GM12878 (cell line): ENCODE measurements at regions of chr14 and their contacts with region 1.

Region 1: GRCh38 chr14:97380539-97380941 is 583.4 kb downstream of the VRK1 start:
- DNase-seq: no peak
- ATAC-seq: no peak
- H3K4me3 ChIP-seq: no peak overlapping the region
- H3K27ac ChIP-seq: no peak overlapping the region
- H3K4me1 ChIP-seq: peaks cover 33% of the 10 kb centered on the region
- H3K27me3 ChIP-seq: no peaks in the 10 kb centered on the region
- CTCF ChIP-seq: no peak
- EP300 ChIP-seq: no peak
- POLR2A ChIP-seq: no peak
- RAD21 ChIP-seq: no peak

Region 2: GRCh38 chr14:97177015-97177414 is 203.5 kb before region 1 on chr14:
- CTCF ChIA-PET with region 1: no interaction called
- POLR2A ChIA-PET with region 1: interaction called, 3 read pairs
- RAD21 ChIA-PET with region 1: interaction called, 3 read pairs
- SMC1A ChIA-PET with region 1: interaction called, 3 read pairs
- in situ Hi-C with region 1: no loop called
- intact Hi-C with region 1: loop called (anchors 10 kb)
- DNase-seq: no peak
- ATAC-seq: peak; percentile 82
- H3K4me3 ChIP-seq: no peak overlapping the region
- H3K27ac ChIP-seq: no peak overlapping the region
- H3K4me1 ChIP-seq: peaks cover 4% of the 10 kb centered on the region; the same call in 1 of the 2 replicates
- H3K27me3 ChIP-seq: no peaks in the 10 kb centered on the region
- CTCF ChIP-seq: peak; percentile 8 to 41 (median 27); a peak in 3 of 6 replicates
- EP300 ChIP-seq: no peak
- POLR2A ChIP-seq: no peak
- RAD21 ChIP-seq: peak; percentile 53

Region 3: GRCh38 chr14:97299661-97300060 is 80.9 kb before region 1 on chr14:
- CTCF ChIA-PET with region 1: interaction called, 13 read pairs
- POLR2A ChIA-PET with region 1: interaction called, 14 read pairs
- RAD21 ChIA-PET with region 1: interaction called, 214 read pairs
- SMC1A ChIA-PET with region 1: interaction called, 43 read pairs
- in situ Hi-C with region 1: no loop called
- intact Hi-C with region 1: no loop called
- DNase-seq: no peak
- ATAC-seq: peak; percentile 55
- H3K4me3 ChIP-seq: no peak overlapping the region
- H3K27ac ChIP-seq: no peak overlapping the region
- H3K4me1 ChIP-seq: no peaks in the 10 kb centered on the region
- H3K27me3 ChIP-seq: no peaks in the 10 kb centered on the region
- CTCF ChIP-seq: peak; percentile 17 to 49 (median 39); a peak in 5 of 6 replicates
- EP300 ChIP-seq: no peak
- POLR2A ChIP-seq: no peak
- RAD21 ChIP-seq: peak; percentile 78

Region 4: DNA sequence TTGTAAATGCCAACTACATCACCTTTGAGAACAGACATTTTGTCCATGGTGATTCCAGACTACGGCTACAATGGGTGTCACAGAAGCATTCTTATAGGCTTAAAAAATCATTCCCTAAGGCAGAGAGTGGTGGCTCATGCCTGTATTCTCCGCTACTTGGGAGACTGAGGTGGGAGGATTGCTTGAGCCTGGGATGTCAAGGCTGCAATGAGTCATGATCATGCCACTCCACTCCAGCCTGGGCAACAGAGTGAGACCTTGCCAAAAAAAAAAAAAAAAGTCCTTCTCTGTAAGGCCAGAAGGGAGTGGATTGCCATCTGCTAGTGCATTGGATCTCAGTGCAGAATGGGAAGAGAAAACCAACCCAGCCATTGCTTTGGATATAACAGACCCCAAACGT is 60.8 kb before region 1 on chr14:
- CTCF ChIA-PET with region 1: no interaction called
- POLR2A ChIA-PET with region 1: no interaction called
- RAD21 ChIA-PET with region 1: interaction called, 13 read pairs
- SMC1A ChIA-PET with region 1: interaction called, 7 read pairs
- in situ Hi-C with region 1: no loop called
- intact Hi-C with region 1: no loop called
- DNase-seq: no peak
- ATAC-seq: no peak; the same call in 2 of the 3 replicates
- H3K4me3 ChIP-seq: no peak overlapping the region
- H3K27ac ChIP-seq: no peak overlapping the region
- H3K4me1 ChIP-seq: peaks cover 8% of the 10 kb centered on the region
- H3K27me3 ChIP-seq: no peaks in the 10 kb centered on the region
- CTCF ChIP-seq: no peak
- EP300 ChIP-seq: no peak
- POLR2A ChIP-seq: no peak
- RAD21 ChIP-seq: no peak

Region 5: DNA sequence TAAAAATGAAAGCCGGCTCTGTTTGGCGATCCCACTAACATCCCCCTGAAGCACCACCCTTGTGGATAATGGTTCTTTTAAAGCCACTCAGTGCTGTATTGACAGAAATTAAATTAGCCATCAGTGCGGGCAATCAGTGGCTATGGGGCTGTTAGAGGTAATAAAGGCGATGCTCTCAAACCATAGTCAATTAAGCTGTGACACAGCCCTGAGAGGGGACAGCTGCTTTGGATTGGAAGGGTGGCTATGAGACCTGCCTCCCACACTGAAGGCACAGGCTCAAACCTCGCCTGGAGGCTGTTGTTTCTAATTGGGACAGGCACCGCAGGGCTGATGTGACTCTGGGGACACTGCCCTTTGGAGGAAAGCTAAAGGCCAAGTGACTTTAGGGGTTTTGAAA is 21.2 kb before region 1 on chr14:
- CTCF ChIA-PET with region 1: interaction called, 5 read pairs
- POLR2A ChIA-PET with region 1: interaction called, 8 read pairs
- RAD21 ChIA-PET with region 1: interaction called, 12 read pairs
- SMC1A ChIA-PET with region 1: interaction called, 12 read pairs
- in situ Hi-C with region 1: no loop called
- intact Hi-C with region 1: no loop called
- DNase-seq: no peak
- ATAC-seq: no peak
- H3K4me3 ChIP-seq: no peak overlapping the region
- H3K27ac ChIP-seq: no peak overlapping the region
- H3K4me1 ChIP-seq: no peaks in the 10 kb centered on the region
- H3K27me3 ChIP-seq: no peaks in the 10 kb centered on the region
- CTCF ChIP-seq: no peak
- EP300 ChIP-seq: no peak
- POLR2A ChIP-seq: no peak
- RAD21 ChIP-seq: no peak

Region 6: DNA sequence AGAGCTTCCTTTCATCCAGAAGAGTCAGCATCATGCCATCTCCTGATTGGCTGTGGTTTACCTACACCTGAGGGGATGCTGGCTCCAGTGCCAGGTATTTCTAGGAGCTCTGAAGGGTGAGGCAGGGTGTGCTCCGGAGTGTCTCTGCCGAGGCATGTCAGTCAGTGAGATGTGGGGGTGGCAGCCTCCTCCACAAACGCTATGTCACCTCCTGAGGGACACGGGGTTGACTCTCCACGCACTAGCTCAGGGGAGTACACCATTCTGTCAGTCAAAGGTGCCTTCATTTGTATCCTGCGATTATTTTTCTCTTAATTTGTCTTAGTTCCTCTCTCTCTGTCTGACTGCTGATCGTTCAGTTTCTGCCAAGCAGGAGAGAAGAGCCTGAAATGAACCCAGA is 21.2 kb after region 1 on chr14:
- CTCF ChIA-PET with region 1: interaction called, 3 read pairs
- POLR2A ChIA-PET with region 1: interaction called, 6 read pairs
- RAD21 ChIA-PET with region 1: interaction called, 83 read pairs
- SMC1A ChIA-PET with region 1: interaction called, 115 read pairs
- in situ Hi-C with region 1: no loop called
- intact Hi-C with region 1: no loop called
- DNase-seq: no peak
- ATAC-seq: peak; percentile 39; the same call in 2 of the 3 replicates
- H3K4me3 ChIP-seq: no peak overlapping the region
- H3K27ac ChIP-seq: no peak overlapping the region
- H3K4me1 ChIP-seq: peaks cover 4% of the 10 kb centered on the region; the same call in 1 of the 2 replicates
- H3K27me3 ChIP-seq: no peaks in the 10 kb centered on the region
- CTCF ChIP-seq: no peak
- EP300 ChIP-seq: no peak
- POLR2A ChIP-seq: no peak
- RAD21 ChIP-seq: no peak

Region 7: DNA sequence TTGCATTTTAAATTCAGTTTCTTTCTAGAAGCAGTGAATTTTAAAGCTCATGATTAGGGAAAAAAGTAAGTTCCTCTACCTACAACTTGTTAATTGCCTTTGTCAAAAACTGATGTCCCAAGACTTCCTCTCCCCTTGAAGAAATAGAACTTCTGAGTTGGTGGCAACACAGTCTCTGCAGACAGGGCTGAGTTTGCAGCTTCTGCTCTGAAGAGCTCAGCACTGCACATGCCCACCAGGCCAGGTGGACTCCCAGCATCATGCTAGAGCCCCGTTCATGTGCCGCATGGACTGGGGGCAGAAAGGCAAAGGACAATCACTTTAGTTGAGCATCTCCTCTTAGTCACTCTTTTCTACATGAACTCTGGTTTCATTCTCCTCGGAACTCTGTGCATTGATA is 36.8 kb after region 1 on chr14:
- CTCF ChIA-PET with region 1: interaction called, 3 read pairs
- POLR2A ChIA-PET with region 1: interaction called, 4 read pairs
- RAD21 ChIA-PET with region 1: interaction called, 83 read pairs
- SMC1A ChIA-PET with region 1: interaction called, 115 read pairs
- in situ Hi-C with region 1: no loop called
- intact Hi-C with region 1: no loop called
- DNase-seq: no peak
- ATAC-seq: peak; percentile 38
- H3K4me3 ChIP-seq: no peak overlapping the region
- H3K27ac ChIP-seq: no peak overlapping the region
- H3K4me1 ChIP-seq: peaks cover 3% of the 10 kb centered on the region; the same call in 1 of the 2 replicates
- H3K27me3 ChIP-seq: no peaks in the 10 kb centered on the region
- CTCF ChIP-seq: no peak
- EP300 ChIP-seq: no peak
- POLR2A ChIP-seq: no peak
- RAD21 ChIP-seq: no peak

Region 8: DNA sequence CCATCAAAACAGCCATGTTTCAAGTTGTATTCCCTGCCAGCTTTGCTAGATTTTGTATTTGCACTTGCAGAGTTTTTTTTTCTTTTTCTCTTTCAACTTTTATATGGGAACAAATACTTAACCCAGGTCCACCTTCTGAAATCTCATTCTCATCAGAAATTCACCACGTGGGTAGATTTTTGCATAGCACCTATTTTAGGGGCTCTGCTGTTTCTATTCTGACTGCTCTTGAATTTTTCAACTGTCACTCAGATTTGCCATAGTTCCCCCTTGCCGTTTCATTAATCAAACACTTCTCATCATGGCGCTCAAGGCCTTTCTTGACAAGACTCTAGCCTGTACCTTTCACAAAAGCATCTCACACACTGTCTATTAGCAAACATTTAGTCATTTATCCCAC is 183.8 kb after region 1 on chr14:
- CTCF ChIA-PET with region 1: no interaction called
- POLR2A ChIA-PET with region 1: no interaction called
- RAD21 ChIA-PET with region 1: no interaction called
- SMC1A ChIA-PET with region 1: no interaction called
- in situ Hi-C with region 1: no loop called
- intact Hi-C with region 1: no loop called
- DNase-seq: no peak
- ATAC-seq: no peak
- H3K4me3 ChIP-seq: no peak overlapping the region
- H3K27ac ChIP-seq: no peak overlapping the region
- H3K4me1 ChIP-seq: 0 out of 2 replicates have a peak, but pooled peaks cover 4% of the 10 kb centered on the region
- H3K27me3 ChIP-seq: no peaks in the 10 kb centered on the region
- CTCF ChIP-seq: no peak
- EP300 ChIP-seq: no peak
- POLR2A ChIP-seq: no peak
- RAD21 ChIP-seq: no peak